MCF 10A (cell line): ENCODE measurements at regions of chr21 and their contacts with region 1.

Region 1: GRCh38 chr21:31604591-31605190 is 54.8 kb upstream of the SOD1 start:
- DNase-seq: peak; percentile 80
- H3K4me3 Mint-ChIP-seq: no peak overlapping the region
- H3K27ac Mint-ChIP-seq: no peak overlapping the region
- H3K4me1 Mint-ChIP-seq: no peaks in the 10 kb centered on the region
- H3K27me3 Mint-ChIP-seq: no peaks in the 10 kb centered on the region
- CTCF ChIP-seq: peak; percentile 83

Region 2: GRCh38 chr21:31098576-31099005 is 506.1 kb before region 1 on chr21:
- CTCF ChIA-PET with region 1: interaction called, 14 read pairs
- POLR2A ChIA-PET with region 1: no interaction called
- intact Hi-C with region 1: loop called (anchors 1 kb)
- DNase-seq: peak; percentile 55
- H3K4me3 Mint-ChIP-seq: no peak overlapping the region
- H3K27ac Mint-ChIP-seq: no peak overlapping the region
- H3K4me1 Mint-ChIP-seq: no peaks in the 10 kb centered on the region
- H3K27me3 Mint-ChIP-seq: peaks cover 16% of the 10 kb centered on the region
- CTCF ChIP-seq: peak; percentile 82

Region 3: GRCh38 chr21:31558962-31559367 is 45.7 kb before region 1 on chr21:
- CTCF ChIA-PET with region 1: no interaction called
- POLR2A ChIA-PET with region 1: no interaction called
- intact Hi-C with region 1: loop called (anchors 1 kb)
- DNase-seq: peak; percentile 93
- H3K4me3 Mint-ChIP-seq: peak overlapping the region; percentile 78
- H3K27ac Mint-ChIP-seq: no peak overlapping the region
- H3K4me1 Mint-ChIP-seq: peaks cover 5% of the 10 kb centered on the region
- H3K27me3 Mint-ChIP-seq: no peaks in the 10 kb centered on the region
- CTCF ChIP-seq: peak; percentile 34